ENCODE measurements at regions of chr14 and their contacts with region 1.

Region 1: DNA sequence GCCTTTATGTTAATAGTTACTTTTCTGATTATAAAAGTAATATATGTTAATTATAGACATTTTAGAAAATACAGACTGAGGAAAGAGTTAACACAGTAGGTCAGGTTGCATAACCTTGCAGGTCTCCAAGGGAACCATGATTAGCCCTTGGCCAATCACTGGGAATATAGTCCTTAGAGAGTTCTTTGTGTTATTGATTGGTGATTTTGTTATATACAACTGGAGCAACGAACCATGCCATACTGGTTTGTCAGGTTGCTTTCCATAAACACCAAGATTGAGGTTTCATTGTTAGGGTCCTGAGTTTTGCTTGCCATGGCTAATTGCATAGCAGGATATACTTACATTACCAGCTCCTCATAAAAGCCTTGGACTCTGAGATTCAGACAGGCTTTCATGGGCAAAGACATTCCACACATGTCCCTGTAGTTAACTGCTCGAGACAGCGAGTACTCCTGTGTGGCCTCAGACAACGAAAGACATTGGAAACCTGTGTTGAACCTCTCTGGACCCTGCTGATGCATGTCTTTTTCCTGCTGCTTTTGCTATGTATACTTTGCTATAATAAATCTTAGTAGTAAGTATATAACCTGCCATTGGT is 33.7 kb downstream of the MAPK1IP1L start:
- DNase-seq: no peak
- H3K4me3 ChIP-seq: no peak overlapping the region
- H3K27ac ChIP-seq: no peak overlapping the region
- H3K4me1 ChIP-seq: peaks cover 0 to 3% (median 1%) of the 10 kb centered on the region in 4 donors
- H3K27me3 ChIP-seq: no peaks in the 10 kb centered on the region
- CTCF ChIP-seq: no peak
- EP300 ChIP-seq: no peak
- POLR2A ChIP-seq: no peak

Region 2: GRCh38 chr14:55038708-55039107 is 46.5 kb before region 1 on chr14:
- in situ Hi-C with region 1: no loop called
- intact Hi-C with region 1: no loop called
- DNase-seq: no peak
- H3K4me3 ChIP-seq: no peak overlapping the region
- H3K27ac ChIP-seq: no peak overlapping the region
- H3K4me1 ChIP-seq: no peaks in the 10 kb centered on the region
- H3K27me3 ChIP-seq: no peaks in the 10 kb centered on the region
- CTCF ChIP-seq: no peak
- EP300 ChIP-seq: no peak
- POLR2A ChIP-seq: no peak

Region 3: DNA sequence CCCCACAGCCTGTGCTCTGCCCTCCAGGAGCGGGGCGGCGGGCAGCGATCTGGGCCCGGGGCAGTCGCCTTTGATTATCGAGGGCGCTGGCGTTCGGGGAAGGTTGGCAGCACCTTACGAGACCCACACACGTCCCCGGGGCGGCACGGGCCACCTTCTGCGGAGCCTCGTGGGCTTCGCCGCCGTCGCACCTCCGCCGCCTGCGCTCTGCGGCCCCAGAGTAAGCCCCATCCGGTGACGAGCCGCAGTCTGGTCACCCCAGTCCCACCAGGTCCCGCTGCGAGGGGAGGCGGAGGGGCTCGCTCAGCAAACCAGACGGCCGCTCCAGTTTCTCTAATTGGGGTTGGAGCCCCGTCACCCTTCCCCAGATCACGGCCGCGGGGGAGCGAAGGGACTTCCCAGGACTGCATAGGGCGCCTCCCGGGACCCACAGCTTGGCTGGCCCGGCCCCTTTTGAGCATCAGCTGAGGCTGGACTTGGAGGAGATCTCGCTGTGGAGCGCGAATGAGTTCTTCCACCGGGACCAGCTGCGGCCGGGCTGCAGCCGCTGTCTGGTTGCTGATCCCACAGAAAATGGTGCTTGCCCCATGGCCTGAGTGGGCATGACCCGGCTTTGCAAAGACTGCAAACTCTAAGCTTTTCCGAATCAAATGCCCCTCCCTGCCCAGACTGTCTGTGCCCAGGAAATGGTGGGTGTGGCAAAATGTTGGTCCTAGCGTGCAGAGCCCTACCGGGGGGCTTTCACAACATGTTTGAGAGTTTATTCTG is 44.5 kb after region 1 on chr14:
- in situ Hi-C with region 1: loop called in 1 of 4 experiments (anchors 10 kb)
- intact Hi-C with region 1: no loop called
- DNase-seq: peak; percentile 59
- H3K4me3 ChIP-seq: peak overlapping the region; percentile 39 to 92 (median 90)
- H3K27ac ChIP-seq: peak overlapping the region; percentile 93 to 99 (median 98)
- H3K4me1 ChIP-seq: peaks cover 20 to 69% (median 59%) of the 10 kb centered on the region in 4 donors
- H3K27me3 ChIP-seq: no peaks in the 10 kb centered on the region
- CTCF ChIP-seq: no peak
- EP300 ChIP-seq: no peak
- POLR2A ChIP-seq: peak; percentile 10

Region 4: GRCh38 chr14:55152052-55152753 is 67.0 kb after region 1 on chr14:
- in situ Hi-C with region 1: loop called in 3 of 4 experiments (anchors 5 to 10 kb)
- intact Hi-C with region 1: no loop called
- DNase-seq: no peak
- H3K4me3 ChIP-seq: no peak overlapping the region
- H3K27ac ChIP-seq: no peak overlapping the region
- H3K4me1 ChIP-seq: no peaks in the 10 kb centered on the region
- H3K27me3 ChIP-seq: no peaks in the 10 kb centered on the region
- CTCF ChIP-seq: no peak
- EP300 ChIP-seq: no peak
- POLR2A ChIP-seq: no peak

Region 5: GRCh38 chr14:55160989-55161388 is 75.8 kb after region 1 on chr14:
- in situ Hi-C with region 1: loop called in 3 of 4 experiments (anchors 5 to 10 kb)
- intact Hi-C with region 1: loop called (anchors 2 kb)
- DNase-seq: no peak
- H3K4me3 ChIP-seq: no peak overlapping the region
- H3K27ac ChIP-seq: no peak overlapping the region
- H3K4me1 ChIP-seq: no peaks in the 10 kb centered on the region
- H3K27me3 ChIP-seq: no peaks in the 10 kb centered on the region
- CTCF ChIP-seq: peak; percentile 51 to 70 (median 57)
- EP300 ChIP-seq: no peak
- POLR2A ChIP-seq: no peak